ENCODE measurements at regions of chr1 and their contacts with region 1.

Region 1: DNA sequence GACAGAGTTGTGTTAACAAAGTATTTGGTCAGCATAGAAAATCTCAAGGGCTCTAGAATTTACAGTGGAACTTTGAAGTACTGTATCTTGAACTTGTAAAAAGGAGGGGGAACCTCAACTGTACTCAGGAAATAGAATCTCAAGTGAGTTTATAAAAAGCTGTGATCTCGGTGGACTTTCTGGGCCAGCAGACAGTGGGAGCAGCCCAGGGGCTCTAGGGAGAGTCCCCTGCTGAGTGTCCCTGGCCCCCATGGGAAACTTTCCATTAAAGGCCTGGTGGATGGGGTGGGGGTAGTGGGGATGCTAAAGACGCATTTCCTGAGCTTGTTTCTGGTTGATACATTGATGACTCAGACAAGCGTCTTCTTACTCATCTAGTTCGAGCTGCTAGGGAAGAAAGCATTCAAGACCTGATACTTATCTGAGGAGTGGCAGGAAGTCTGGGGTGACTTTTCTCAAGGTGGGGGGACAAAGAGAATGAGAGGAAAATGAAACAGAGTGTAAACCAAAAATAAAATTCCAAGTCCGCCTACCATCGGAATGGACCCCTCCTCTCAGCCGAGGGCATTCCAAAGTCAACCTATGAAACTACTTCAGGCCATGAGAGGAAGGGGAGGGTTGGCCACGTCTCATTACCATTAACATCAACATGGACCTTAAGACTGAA is 65.5 kb downstream of the NID1 start:
- DNase-seq: peak; percentile 77
- H3K4me3 Mint-ChIP-seq: peak overlapping the region; percentile 32
- H3K27ac Mint-ChIP-seq: peak overlapping the region; percentile 94
- H3K4me1 Mint-ChIP-seq: peaks cover 80% of the 10 kb centered on the region
- H3K27me3 Mint-ChIP-seq: peaks cover 3% of the 10 kb centered on the region

Region 2: DNA sequence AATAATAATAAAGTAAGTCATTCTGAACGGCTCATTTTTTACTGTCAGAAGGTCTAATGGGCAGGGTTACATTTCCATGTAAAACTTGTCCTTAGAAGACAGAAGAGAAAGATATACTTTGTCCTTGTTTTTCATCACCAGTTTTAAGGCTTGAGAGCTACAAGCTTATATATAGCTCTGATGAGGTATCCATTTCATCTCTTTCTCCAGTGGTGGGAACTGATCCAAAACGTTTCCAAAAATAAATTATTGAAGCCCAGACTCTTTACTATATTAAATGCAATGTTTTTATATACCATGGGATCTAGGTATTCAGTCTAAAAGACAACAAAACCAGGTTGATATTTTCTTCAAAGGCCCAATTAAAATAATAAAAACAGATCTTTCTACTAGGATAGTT is 503.8 kb before region 1 on chr1:
- intact Hi-C with region 1: loop called (anchors 1 kb)
- DNase-seq: no peak
- H3K4me3 Mint-ChIP-seq: no peak overlapping the region
- H3K27ac Mint-ChIP-seq: no peak overlapping the region
- H3K4me1 Mint-ChIP-seq: peaks cover 30% of the 10 kb centered on the region
- H3K27me3 Mint-ChIP-seq: no peaks in the 10 kb centered on the region

Region 3: GRCh38 chr1:235697508-235697907 is 301.9 kb before region 1 on chr1:
- intact Hi-C with region 1: loop called (anchors 1 kb)
- DNase-seq: no peak
- H3K4me3 Mint-ChIP-seq: no peak overlapping the region
- H3K27ac Mint-ChIP-seq: peak overlapping the region; percentile 91
- H3K4me1 Mint-ChIP-seq: peaks cover 20% of the 10 kb centered on the region
- H3K27me3 Mint-ChIP-seq: no peaks in the 10 kb centered on the region

Region 4: DNA sequence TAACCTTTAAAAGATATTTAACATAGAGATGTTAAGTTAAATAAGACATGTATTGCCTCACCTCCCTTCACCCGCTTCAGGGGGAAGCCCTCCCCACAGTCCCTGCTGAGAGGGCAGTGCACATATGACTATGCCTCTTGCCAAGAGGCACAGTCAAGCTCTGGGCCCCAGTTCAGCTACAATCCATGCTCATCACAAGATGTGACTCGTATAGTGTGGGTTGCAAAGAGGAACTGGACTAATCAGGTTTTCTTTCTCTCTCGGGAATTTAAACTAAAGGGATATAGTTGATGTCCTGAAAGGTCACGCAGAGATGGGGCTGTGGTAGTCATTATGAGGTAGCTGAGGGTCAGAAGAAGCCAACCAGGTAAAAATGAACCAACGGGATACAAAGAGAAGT is 168.2 kb before region 1 on chr1:
- intact Hi-C with region 1: loop called (anchors 1 kb)
- DNase-seq: no peak
- H3K4me3 Mint-ChIP-seq: no peak overlapping the region
- H3K27ac Mint-ChIP-seq: peak overlapping the region; percentile 38
- H3K4me1 Mint-ChIP-seq: peaks cover 14% of the 10 kb centered on the region
- H3K27me3 Mint-ChIP-seq: no peaks in the 10 kb centered on the region

Region 5: DNA sequence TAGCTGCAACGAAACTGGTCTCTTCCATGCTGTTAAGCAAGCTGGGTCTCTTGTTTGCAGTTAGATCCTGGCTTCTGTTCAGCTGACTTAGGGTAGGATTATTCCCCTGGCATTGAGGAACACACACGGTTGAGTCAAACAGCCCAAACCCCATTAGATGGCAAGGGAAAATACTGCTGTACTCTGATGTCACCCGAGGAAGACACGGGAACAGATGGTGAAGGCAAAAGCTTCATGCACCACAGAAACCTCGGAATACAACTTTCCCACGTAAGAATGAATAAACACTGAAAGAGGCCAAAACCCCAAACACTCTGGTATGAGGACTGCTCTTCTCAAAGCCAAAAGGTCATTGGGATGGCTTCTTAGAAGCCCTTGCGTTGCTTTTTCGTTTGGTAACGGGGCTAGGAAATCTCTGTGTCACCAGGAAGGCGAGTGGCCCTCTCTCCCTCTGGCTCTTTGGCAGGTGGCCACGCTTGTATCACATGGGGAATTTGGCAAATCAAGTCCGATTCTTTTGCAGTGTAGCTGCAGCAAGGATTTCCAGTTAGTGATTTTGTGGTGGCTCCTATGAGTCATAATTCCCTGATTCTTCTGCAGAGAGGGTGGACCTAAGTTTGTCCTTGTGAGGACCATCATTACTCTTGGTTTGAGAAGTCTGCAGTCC is 116.0 kb before region 1 on chr1:
- intact Hi-C with region 1: loop called (anchors 1 kb)
- DNase-seq: no peak
- H3K4me3 Mint-ChIP-seq: peak overlapping the region; percentile 81
- H3K27ac Mint-ChIP-seq: peak overlapping the region; percentile 89
- H3K4me1 Mint-ChIP-seq: peaks cover 78% of the 10 kb centered on the region
- H3K27me3 Mint-ChIP-seq: no peaks in the 10 kb centered on the region

Region 6: DNA sequence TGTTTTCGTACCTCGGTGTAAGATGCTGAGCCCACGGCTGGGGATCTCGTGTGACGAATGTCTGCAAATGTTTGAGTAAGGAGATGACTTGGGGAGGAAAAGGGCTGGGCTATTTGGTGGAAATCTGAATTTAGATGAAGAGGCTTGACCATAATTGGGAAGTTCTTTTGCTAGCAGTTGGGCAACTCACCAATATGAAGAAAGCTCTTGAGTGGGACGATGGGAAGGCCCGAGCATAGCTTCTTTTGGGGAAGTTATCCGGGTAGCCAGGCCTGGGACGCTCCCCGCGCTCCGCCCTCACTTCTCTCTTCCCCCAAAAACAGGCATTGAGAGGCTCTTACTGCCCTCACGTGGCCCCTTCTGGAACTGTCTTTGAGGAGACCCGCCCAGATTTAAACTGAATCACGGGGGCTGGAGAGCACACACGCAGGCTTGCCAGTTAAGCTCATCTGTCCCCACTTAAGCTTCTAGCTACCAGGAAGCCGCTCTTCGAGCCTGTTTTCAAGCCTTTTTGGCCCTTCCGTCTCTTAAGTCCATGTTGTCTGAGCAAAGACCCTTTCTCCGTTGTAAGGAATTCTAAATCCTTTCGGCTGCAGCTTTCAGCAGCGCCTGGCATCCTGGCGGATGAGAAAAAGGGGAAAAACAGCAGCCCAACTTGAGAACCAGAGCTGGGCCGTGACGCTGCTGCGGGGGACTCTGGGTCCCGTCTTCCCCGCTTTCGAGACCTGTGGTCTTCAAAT is 27.7 kb before region 1 on chr1:
- intact Hi-C with region 1: loop called (anchors 1 kb)
- DNase-seq: peak; percentile 80
- H3K4me3 Mint-ChIP-seq: peak overlapping the region; percentile 79
- H3K27ac Mint-ChIP-seq: peak overlapping the region; percentile 84
- H3K4me1 Mint-ChIP-seq: peaks cover 17% of the 10 kb centered on the region
- H3K27me3 Mint-ChIP-seq: peaks cover 11% of the 10 kb centered on the region

Region 7: DNA sequence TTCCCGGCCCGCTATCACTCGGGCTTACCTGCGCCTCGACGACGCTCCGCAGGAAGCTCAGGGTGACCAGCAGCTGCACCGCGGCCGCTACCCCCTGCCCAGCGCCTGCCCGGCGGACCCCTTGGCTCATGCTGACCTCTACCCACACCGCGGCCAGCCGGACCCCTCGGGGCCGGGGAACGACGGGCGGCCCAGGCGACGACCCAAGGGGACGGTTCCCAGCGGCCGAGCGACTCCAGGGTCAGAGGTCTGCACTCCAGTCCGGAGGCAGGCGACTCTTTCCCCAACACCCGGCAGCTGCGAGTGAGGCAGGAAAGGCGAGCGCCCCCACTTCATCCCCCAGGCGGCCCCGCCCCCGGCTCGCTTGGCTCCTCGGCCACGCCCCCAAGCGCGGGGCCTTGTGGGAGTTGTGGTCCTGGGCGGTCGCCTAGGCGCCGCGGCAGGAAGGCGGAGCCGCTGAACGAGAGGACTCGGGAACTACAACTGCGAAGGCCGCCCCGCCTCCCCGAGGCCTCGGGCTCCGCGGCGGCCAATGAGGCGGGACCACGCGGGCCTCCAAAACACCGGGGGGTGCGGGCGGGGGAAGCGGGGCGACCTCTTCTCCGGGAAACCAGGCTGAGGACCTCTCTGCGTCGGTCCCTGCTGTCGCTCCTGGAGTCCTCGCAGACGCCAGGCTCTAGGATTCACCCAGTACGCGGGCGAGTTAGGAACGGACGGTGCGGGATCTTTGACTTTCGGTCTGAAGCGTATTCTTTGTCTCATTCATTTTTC is 282.4 kb after region 1 on chr1 and contains the start of gene ERO1B:
- intact Hi-C with region 1: loop called (anchors 2 kb)
- DNase-seq: peak; percentile 98
- H3K4me3 Mint-ChIP-seq: peak within 1 kb of the TSS; percentile 90
- H3K27ac Mint-ChIP-seq: peak within 1 kb of the TSS; percentile 80
- H3K4me1 Mint-ChIP-seq: peaks cover 45% of the 10 kb centered on the region
- H3K27me3 Mint-ChIP-seq: peaks cover 12% of the 10 kb centered on the region
- total RNA-seq, gene ERO1B: 2.1 and 2.4 TPM in 2 replicates